ENCODE measurements at regions of chr17 and their contacts with region 1.

Region 1: GRCh38 chr17:63611354-63611753 is 10.7 kb downstream of the TACO1 start:
- DNase-seq: no peak
- ATAC-seq: no peak
- H3K4me3 ChIP-seq: no peak overlapping the region
- H3K4me3 Mint-ChIP-seq: no peak overlapping the region
- H3K27ac ChIP-seq: no peak overlapping the region
- H3K27ac Mint-ChIP-seq: no peak overlapping the region
- H3K4me1 ChIP-seq: no peaks in the 10 kb centered on the region
- H3K4me1 Mint-ChIP-seq: no peaks in the 10 kb centered on the region
- H3K27me3 ChIP-seq: no peaks in the 10 kb centered on the region
- H3K27me3 Mint-ChIP-seq: no peaks in the 10 kb centered on the region
- CTCF ChIP-seq: no peak

Region 2: DNA sequence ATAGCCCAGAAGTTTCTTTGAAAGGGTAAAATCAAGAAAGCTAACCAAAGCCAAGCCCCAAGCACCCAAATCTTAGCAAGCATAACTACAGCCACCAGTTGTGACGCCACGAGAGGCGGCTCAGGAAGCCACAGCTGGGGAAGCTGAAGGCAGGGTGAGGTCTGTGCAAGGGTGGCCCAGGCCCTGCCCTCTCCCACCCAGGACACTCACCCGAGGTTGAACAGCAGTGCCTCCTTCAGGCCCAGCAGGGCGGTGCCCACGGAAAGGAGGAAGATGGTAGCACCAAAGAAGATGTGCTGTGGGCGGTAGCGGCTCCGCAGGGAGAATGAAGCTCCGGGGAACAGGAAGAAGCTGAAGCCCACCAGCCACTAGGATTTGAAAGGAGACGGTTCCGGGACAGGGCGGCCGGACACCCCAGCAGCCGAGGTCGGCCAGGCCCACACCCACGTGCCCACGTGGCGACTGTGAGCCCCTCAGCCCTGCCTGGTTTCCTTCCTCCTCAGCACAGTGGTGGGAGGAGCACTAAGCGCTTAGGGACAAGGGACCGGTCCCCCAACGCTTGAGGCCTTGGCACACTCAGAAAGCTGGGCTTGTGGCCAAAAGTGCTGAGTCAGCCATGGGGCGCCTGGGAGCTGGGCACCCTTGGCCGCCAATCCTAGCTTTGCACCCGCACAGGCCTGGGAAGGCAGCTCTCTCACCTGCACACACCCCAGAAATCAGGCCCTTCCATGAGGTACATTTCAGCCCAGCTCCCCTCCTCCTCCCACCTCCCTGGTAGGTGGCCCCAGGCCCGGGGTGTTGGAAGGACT is 176.3 kb before region 1 on chr17:
- CTCF ChIA-PET with region 1: interaction called, 158 read pairs
- POLR2A ChIA-PET with region 1: no interaction called
- intact Hi-C with region 1: no loop called
- DNase-seq: no peak
- ATAC-seq: peak; percentile 21
- H3K4me3 ChIP-seq: no peak overlapping the region
- H3K4me3 Mint-ChIP-seq: no peak overlapping the region
- H3K27ac ChIP-seq: no peak overlapping the region
- H3K27ac Mint-ChIP-seq: no peak overlapping the region
- H3K4me1 ChIP-seq: peaks cover 12 to 26% of the 10 kb centered on the region in 2 donors
- H3K4me1 Mint-ChIP-seq: peaks cover 12% of the 10 kb centered on the region
- H3K27me3 ChIP-seq: peaks cover 0 to 28% (median under 1%) of the 10 kb centered on the region in 4 experiments
- H3K27me3 Mint-ChIP-seq: peaks cover 10% of the 10 kb centered on the region
- CTCF ChIP-seq: no peak

Region 3: DNA sequence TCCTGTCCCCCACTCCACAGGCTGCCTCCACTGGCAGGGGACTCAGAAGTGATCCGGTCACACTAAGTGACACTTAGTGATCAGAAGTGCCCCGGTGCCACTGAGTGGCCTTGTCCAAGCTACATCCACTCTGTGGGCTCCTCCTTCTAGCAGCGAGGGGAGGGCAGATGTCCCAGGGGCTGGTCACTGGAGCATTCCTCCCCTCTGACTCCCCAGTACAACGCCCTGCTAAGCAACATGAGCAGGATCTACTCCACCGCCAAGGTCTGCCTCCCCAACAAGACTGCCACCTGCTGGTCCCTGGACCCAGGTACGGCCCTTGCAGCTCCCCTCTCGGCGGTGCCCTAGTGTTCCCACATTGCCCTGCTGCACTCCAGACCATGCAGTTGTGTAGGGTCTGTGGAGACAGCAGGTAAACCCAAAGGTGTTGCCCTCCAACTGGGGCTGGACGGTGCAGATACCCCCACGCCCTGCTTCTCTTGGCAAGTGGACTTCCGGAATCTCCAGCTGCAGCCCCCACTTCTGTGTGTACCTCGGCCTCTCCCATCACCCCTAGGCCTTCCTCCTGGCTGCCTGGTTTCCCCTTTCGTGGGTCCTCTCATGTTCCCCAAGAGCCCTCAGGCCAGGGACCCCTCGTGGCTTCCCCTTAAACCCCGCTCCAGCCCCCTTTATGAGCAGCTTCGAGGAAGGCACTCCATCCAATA is 132.4 kb before region 1 on chr17:
- CTCF ChIA-PET with region 1: interaction called, 16 read pairs
- POLR2A ChIA-PET with region 1: interaction called, 3 read pairs
- intact Hi-C with region 1: no loop called
- DNase-seq: peak; percentile 81
- ATAC-seq: peak; percentile 79
- H3K4me3 ChIP-seq: no peak overlapping the region
- H3K4me3 Mint-ChIP-seq: peak overlapping the region; percentile 71
- H3K27ac ChIP-seq: no peak overlapping the region
- H3K27ac Mint-ChIP-seq: no peak overlapping the region
- H3K4me1 ChIP-seq: peaks cover 20% of the 10 kb centered on the region in 2 donors
- H3K4me1 Mint-ChIP-seq: peaks cover 24% of the 10 kb centered on the region
- H3K27me3 ChIP-seq: peaks cover 0 to 46% (median 13%) of the 10 kb centered on the region in 4 experiments
- H3K27me3 Mint-ChIP-seq: peaks cover 35% of the 10 kb centered on the region
- CTCF ChIP-seq: peak; percentile 78

Region 4: DNA sequence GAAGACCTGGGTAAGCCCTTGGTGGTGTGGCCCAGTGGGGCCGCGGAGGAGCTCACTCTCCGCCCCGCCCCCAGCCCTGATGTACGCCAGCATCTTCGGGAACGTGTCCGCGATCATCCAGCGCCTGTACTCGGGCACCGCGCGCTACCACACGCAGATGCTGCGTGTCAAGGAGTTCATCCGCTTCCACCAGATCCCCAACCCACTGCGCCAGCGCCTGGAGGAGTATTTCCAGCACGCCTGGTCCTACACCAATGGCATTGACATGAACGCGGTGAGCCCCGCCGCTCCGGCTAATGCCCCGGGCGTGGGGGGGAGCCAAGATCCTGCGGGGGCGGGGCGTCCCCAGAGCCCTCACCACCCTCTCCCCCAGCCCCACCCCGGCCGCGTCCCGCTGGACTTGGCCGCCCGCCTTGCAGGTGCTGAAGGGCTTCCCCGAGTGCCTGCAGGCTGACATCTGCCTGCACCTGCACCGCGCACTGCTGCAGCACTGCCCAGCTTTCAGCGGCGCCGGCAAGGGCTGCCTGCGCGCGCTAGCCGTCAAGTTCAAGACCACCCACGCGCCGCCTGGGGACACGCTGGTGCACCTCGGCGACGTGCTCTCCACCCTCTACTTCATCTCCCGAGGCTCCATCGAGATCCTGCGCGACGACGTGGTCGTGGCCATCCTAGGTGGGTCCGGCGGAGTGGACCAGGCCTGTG is 73.2 kb before region 1 on chr17:
- CTCF ChIA-PET with region 1: no interaction called
- POLR2A ChIA-PET with region 1: no interaction called
- intact Hi-C with region 1: no loop called
- DNase-seq: no peak
- ATAC-seq: peak; percentile 39
- H3K4me3 ChIP-seq: peak overlapping the region in 1 of 5 experiments; percentile 5
- H3K4me3 Mint-ChIP-seq: peak overlapping the region; percentile 56
- H3K27ac ChIP-seq: no peak overlapping the region
- H3K27ac Mint-ChIP-seq: no peak overlapping the region
- H3K4me1 ChIP-seq: peaks cover 12% of the 10 kb centered on the region in 2 donors
- H3K4me1 Mint-ChIP-seq: peaks cover 5% of the 10 kb centered on the region
- H3K27me3 ChIP-seq: peaks cover 0 to 30% (median 18%) of the 10 kb centered on the region in 4 experiments
- H3K27me3 Mint-ChIP-seq: peaks cover 39% of the 10 kb centered on the region
- CTCF ChIP-seq: no peak

Region 5: DNA sequence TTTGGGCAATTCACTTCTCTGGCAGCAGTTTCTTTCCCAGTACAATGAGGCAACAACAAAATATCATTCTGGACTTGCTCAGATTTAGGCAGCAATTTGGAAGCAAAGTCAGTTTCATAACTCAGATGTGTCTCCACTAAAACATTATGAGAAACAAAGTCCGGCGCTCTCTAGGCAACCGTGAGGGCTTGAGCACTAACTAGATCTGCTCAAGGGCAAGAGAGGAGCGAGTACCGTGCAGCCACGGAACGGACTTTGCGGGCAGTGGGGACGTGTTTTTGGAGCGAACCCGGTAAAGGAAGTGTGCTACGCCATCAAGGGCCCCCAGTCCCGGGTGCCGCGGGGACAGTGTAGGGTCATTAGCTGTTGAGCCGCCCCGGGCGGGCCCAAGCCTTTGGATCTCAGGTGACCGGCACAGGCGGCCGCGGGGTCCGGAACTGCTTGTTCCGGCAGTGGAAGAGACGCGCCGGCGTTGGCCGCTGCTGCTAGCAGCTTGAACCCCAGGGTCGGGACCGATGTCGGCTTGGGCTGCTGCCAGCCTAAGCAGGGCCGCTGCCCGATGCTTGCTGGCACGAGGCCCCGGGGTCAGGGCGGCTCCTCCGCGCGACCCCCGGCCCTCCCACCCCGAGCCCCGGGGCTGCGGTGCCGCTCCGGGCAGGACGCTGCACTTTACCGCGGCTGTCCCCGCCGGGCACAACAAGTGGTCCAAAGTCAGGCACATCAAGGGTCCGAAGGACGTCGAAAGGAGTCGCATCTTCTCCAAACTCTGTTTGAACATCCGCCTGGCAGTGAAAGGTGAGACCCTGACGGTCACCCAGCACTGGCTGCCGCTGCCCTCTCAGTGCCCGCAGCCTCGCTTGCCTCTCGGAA is 10.6 kb before region 1 on chr17 and contains the start of gene TACO1:
- CTCF ChIA-PET with region 1: interaction called, 31 read pairs
- POLR2A ChIA-PET with region 1: no interaction called
- intact Hi-C with region 1: no loop called
- DNase-seq: peak; percentile 87
- ATAC-seq: peak; percentile 97
- H3K4me3 ChIP-seq: peak within 1 kb of the TSS; percentile 67 to 97 (median 91)
- H3K4me3 Mint-ChIP-seq: peak within 1 kb of the TSS; percentile 95
- H3K27ac ChIP-seq: peak within 1 kb of the TSS; percentile 39 to 88
- H3K27ac Mint-ChIP-seq: peak within 1 kb of the TSS; percentile 93
- H3K4me1 ChIP-seq: peaks cover 15 to 19% of the 10 kb centered on the region in 2 donors
- H3K4me1 Mint-ChIP-seq: peaks cover 21% of the 10 kb centered on the region
- H3K27me3 ChIP-seq: no peaks in the 10 kb centered on the region
- H3K27me3 Mint-ChIP-seq: no peaks in the 10 kb centered on the region
- CTCF ChIP-seq: no peak
- total RNA-seq, gene TACO1: 15.9 and 17.2 TPM in 2 replicates

Region 6: DNA sequence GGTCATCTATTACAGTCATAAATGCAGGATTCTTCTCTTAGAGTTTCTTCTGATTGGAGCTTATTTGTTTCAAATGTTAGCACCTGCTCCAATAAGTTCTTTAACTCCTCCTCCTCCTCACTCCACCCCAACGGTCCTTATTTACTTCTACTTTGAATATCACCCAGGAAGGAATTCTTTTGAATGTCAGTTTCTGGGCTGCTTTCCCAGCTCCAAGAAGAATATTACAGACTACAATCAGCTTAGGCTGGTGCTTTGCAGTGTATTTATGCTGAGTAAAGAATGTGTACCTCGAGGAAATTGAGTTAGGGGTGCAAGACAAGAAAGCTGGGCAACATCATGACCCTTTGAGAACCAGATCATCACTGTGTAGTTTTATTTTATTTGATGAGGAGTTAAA is 41.7 kb after region 1 on chr17:
- CTCF ChIA-PET with region 1: no interaction called
- POLR2A ChIA-PET with region 1: no interaction called
- intact Hi-C with region 1: no loop called
- DNase-seq: no peak
- ATAC-seq: no peak
- H3K4me3 ChIP-seq: no peak overlapping the region
- H3K4me3 Mint-ChIP-seq: no peak overlapping the region
- H3K27ac ChIP-seq: no peak overlapping the region
- H3K27ac Mint-ChIP-seq: peak overlapping the region; percentile 10
- H3K4me1 ChIP-seq: no peaks in the 10 kb centered on the region
- H3K4me1 Mint-ChIP-seq: peaks cover 3% of the 10 kb centered on the region
- H3K27me3 ChIP-seq: no peaks in the 10 kb centered on the region
- H3K27me3 Mint-ChIP-seq: no peaks in the 10 kb centered on the region
- CTCF ChIP-seq: no peak

Region 7: DNA sequence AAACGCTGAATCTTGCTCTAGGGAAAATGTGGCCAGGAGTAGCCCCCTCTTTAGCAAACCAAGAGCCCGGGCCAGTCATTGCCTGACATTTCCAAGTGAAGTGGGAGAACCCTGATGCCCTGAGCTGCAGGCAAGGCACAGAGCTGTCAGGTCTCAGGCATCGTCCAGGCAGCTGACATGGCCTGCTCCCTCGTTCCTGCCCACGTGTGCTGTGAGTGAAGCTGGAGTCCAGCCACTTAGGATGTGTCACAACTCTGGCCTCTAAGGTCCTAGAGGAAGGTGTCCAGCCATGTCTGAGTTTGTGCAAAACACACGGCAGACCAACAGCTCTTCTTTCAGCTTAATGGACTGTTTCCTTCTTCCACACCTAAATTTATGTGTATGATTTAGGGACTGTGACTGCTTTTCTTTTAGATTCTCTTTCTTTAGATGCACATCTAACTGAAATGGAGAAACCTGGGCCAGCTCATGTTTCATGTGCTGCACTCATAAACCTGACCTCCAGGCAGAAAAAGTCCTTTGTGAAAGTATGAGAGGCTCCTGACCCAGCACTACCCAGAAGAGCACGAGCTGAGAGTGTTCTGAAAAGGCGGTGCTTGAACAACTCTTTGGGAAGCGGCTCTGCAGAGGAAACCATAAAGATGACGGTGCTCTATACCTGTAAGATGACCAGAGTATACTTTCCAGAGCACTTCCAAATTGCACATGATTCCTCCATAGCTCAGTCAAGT is 103.4 kb after region 1 on chr17:
- CTCF ChIA-PET with region 1: interaction called, 32 read pairs
- POLR2A ChIA-PET with region 1: interaction called, 3 read pairs
- intact Hi-C with region 1: loop called (anchors 1 kb)
- DNase-seq: no peak
- ATAC-seq: no peak
- H3K4me3 ChIP-seq: no peak overlapping the region
- H3K4me3 Mint-ChIP-seq: no peak overlapping the region
- H3K27ac ChIP-seq: no peak overlapping the region
- H3K27ac Mint-ChIP-seq: no peak overlapping the region
- H3K4me1 ChIP-seq: peaks cover 6 to 8% of the 10 kb centered on the region in 2 donors
- H3K4me1 Mint-ChIP-seq: peaks cover 8% of the 10 kb centered on the region
- H3K27me3 ChIP-seq: no peaks in the 10 kb centered on the region
- H3K27me3 Mint-ChIP-seq: no peaks in the 10 kb centered on the region
- CTCF ChIP-seq: no peak

Measured in B cell (primary cell).